Aorta (tissue), 5 donors: ENCODE measurements at regions of chr9 and their contacts with region 1.

Region 1: GRCh38 chr9:88388172-88388885 is at the start of gene SPIN1:
- DNase-seq: peak; percentile 89 to 95
- ATAC-seq: peak; percentile 88
- H3K4me3 ChIP-seq: peak within 1 kb of the TSS; percentile 100
- H3K27ac ChIP-seq: peak within 1 kb of the TSS; percentile 31 to 90
- H3K4me1 ChIP-seq: peaks cover 3 to 4% of the 10 kb centered on the region in 2 donors
- H3K27me3 ChIP-seq: no peaks in the 10 kb centered on the region
- total RNA-seq, gene SPIN1: 79.9 to 93.3 TPM

Region 2: GRCh38 chr9:88076286-88077090 is 311.8 kb before region 1 on chr9:
- intact Hi-C with region 1: loop called in 1 of 2 experiments (anchors 10 kb)
- DNase-seq: peak; percentile 73 to 89
- ATAC-seq: peak; percentile 91
- H3K4me3 ChIP-seq: peak overlapping the region; percentile 4 to 47
- H3K27ac ChIP-seq: no peak overlapping the region
- H3K4me1 ChIP-seq: no peaks in the 10 kb centered on the region
- H3K27me3 ChIP-seq: no peaks in the 10 kb centered on the region

Region 3: DNA sequence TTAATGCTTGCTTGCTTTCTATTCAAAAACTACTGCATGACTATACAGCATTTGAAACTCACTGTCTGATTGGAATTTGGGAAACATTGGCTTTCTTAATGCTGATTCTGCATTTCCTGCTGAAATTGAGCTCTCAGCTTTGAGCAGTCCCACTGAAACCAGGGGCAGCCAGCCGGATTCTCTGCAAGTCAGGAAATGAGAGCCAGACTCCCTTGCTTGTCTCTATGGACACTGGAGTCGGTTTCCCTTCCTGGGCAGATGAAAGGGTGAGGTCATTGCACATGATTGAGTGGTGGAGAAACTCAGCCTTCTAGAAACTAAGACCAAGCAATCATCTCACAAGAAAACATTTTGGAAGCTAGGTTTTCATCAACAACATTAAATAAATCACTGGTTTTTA is 130.3 kb before region 1 on chr9:
- intact Hi-C with region 1: loop called in 1 of 2 experiments (anchors 10 kb)
- DNase-seq: peak in 1 of 2 donors; percentile 76
- ATAC-seq: no peak
- H3K4me3 ChIP-seq: no peak overlapping the region
- H3K27ac ChIP-seq: no peak overlapping the region
- H3K4me1 ChIP-seq: no peaks in the 10 kb centered on the region
- H3K27me3 ChIP-seq: no peaks in the 10 kb centered on the region

Region 4: DNA sequence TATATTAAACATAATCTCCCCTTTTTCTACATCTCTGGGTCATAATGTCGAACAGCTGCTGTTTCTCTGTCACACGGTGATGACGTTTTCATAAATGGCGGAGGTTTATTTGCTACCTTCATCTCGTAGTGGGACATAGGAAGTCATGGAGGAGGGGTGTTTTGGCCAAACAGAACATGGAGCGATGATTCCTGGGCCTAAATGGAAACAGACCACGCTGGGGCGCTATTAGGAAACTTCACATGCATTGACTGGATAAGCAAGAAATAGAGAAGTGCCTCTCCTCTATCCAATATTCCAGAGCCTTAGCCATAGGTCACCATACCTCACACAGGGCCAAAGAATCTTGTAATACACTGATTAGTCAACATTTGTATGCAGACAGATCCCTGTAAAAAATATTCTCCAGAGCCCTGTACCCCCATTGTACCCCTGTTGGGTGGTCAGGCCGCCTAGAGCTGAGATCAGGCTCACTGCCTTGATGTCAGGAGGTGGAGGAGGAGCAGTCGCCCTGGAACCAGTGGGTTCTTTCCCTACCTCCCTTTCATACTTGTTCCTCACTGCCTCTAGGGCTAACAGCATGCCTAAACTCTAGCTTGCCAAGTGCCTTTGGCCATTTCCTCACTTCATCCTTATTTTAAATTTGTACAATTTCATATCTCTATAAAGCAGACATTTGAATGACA is 77.9 kb before region 1 on chr9:
- intact Hi-C with region 1: no loop called
- DNase-seq: peak in 1 of 2 donors; percentile 5
- ATAC-seq: no peak
- H3K4me3 ChIP-seq: no peak overlapping the region
- H3K27ac ChIP-seq: no peak overlapping the region
- H3K4me1 ChIP-seq: no peaks in the 10 kb centered on the region
- H3K27me3 ChIP-seq: no peaks in the 10 kb centered on the region

Region 5: GRCh38 chr9:88578121-88579054 is 190.1 kb after region 1 on chr9:
- intact Hi-C with region 1: loop called in 1 of 2 experiments (anchors 5 kb)
- DNase-seq: peak; percentile 88 to 96
- ATAC-seq: peak; percentile 93
- H3K4me3 ChIP-seq: no peak overlapping the region
- H3K27ac ChIP-seq: no peak overlapping the region
- H3K4me1 ChIP-seq: no peaks in the 10 kb centered on the region
- H3K27me3 ChIP-seq: no peaks in the 10 kb centered on the region